ENCODE measurements at regions of chr10 and their contacts with region 1.

Region 1: DNA sequence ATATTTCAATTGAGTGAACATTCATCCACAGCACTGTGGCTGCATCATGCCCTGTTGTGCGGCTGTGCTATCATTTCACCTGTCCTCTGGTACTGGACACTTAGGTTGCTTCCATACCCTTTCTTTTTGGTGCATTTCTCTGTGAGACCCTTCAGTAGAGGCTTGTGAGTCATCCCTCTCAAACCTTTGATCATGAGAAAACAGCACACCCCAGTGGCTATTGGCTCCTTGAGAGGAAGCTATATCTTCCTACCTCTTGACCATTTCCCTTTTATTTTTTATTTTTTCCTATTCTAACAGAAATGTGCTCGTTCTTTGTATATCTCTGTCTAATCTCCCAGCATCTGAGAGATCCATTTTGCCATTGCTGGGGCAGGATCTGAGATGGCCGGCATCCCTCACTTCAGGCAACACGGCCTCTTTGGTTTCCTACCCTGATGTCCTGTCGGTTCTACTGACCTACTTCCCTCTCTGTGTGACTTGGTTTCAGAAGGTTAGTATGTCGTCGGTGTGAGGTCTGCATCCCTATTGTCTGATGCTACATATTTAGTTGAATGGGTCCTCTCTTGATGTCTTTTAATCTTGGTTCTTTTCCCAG is 23.8 kb upstream of the PIK3AP1 start:
- DNase-seq: no peak
- ATAC-seq: peak; percentile 61
- H3K4me3 ChIP-seq: no peak overlapping the region
- H3K27ac ChIP-seq: no peak overlapping the region
- H3K4me1 ChIP-seq: peaks cover 25% of the 10 kb centered on the region
- H3K27me3 ChIP-seq: no peaks in the 10 kb centered on the region
- CTCF ChIP-seq: peak; percentile 21 to 60 (median 38); a peak in 4 of 6 replicates
- EP300 ChIP-seq: no peak
- POLR2A ChIP-seq: no peak
- RAD21 ChIP-seq: peak; percentile 57

Region 2: DNA sequence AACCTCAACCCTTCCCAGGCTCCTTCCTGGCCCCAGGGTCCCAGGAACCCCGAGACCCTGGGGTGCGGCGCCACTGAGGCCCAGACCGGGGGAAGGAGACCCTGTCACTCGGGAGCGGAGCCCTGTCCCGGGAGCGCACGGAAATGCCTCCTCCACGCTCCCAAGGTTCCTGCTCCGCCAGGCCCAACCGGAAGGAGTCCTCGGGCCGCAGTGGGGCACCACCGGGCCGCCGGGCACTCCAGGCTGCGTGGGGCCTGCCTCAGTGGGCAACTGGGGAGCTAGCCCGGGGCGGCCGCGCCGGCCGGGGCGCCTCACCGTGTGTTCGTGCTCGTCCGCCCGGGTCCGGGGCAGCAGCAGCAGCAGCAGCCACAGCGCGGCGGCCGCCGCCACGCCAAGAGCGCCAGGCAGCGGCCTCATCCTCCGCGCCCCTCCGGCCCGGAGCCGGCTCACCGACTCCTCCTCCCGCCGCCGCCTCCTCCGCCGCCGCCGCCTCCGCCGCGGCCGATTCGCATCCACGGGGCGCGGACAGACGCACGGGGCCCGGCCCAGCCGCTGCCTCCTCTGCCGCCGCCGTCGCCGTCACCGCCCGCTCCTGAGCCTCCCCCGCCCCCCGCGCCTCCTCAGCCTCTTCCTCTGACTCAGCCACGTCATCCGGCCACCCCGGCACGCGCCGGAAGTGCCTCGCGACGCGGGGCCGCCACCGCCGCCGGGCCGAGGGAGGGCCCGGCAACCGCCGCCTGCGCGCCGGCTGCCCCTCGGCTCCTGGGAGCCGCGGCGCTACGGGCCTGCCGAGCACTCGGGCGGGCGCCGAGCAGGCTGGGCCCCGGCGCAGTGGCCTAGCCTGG is 157.4 kb before region 1 on chr10 and contains the start of gene TM9SF3:
- CTCF ChIA-PET with region 1: interaction called, 3 read pairs
- POLR2A ChIA-PET with region 1: no interaction called
- RAD21 ChIA-PET with region 1: interaction called, 3 read pairs
- SMC1A ChIA-PET with region 1: no interaction called
- in situ Hi-C with region 1: no loop called
- intact Hi-C with region 1: loop called (anchors 5 kb)
- DNase-seq: no peak
- ATAC-seq: peak; percentile 66
- H3K4me3 ChIP-seq: peak within 1 kb of the TSS; percentile 85
- H3K27ac ChIP-seq: peak within 1 kb of the TSS; percentile 96
- H3K4me1 ChIP-seq: peaks cover 22% of the 10 kb centered on the region
- H3K27me3 ChIP-seq: no peaks in the 10 kb centered on the region
- CTCF ChIP-seq: no peak
- EP300 ChIP-seq: no peak
- POLR2A ChIP-seq: peak; percentile 90
- RAD21 ChIP-seq: no peak
- polyA plus RNA-seq, gene TM9SF3: 17.1 to 20.4 TPM

Region 3: DNA sequence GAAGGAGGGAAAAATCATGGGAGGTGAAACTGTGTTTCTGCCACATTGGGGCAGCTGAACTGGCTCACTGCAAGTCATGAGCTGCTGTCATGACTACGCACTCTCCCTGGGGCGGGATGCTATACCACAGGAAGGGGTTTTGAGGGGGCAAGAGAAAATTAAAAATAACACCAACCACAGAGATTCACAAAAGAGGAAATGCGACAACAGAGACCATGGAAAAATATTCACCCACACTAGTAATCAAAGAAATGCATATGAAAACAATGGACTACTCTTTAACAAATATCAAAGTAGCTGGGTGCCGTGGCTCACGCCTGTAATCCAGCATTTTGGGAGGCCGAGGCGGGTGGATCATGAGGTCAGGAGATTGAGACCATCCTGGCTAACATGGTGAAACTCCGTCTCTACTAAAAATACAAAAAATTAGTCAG is 92.1 kb before region 1 on chr10:
- CTCF ChIA-PET with region 1: interaction called, 3 read pairs
- POLR2A ChIA-PET with region 1: interaction called, 4 read pairs
- RAD21 ChIA-PET with region 1: interaction called, 4 read pairs
- SMC1A ChIA-PET with region 1: interaction called, 24 read pairs
- in situ Hi-C with region 1: no loop called
- intact Hi-C with region 1: no loop called
- DNase-seq: peak; percentile 79
- ATAC-seq: peak; percentile 89
- H3K4me3 ChIP-seq: no peak overlapping the region
- H3K27ac ChIP-seq: peak overlapping the region; percentile 79
- H3K4me1 ChIP-seq: peaks cover 50% of the 10 kb centered on the region
- H3K27me3 ChIP-seq: no peaks in the 10 kb centered on the region
- CTCF ChIP-seq: no peak
- EP300 ChIP-seq: peak; percentile 85 to 95
- POLR2A ChIP-seq: no peak
- RAD21 ChIP-seq: 0 out of 2 replicates have a peak, but pooled peaks have one; percentile 2

Region 4: DNA sequence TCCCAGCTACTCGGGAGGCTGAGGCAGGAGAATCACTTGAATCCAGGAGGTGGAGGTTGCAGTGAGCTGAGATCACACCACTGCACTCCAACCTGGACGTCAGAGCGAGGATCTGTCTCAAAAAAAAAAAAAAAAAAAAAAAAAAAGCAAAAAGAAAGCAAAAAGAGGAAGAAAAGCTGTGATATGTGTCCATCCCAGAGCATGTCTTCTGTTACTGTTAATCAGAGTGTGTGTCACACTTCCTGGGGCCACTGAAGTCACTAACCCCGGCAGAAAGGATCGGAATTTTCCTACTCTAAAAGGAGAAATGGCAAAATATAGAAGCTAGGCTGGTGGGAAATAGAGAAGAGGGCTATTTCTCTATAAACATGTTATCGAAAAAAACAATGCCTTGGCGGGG is 35.6 kb before region 1 on chr10:
- CTCF ChIA-PET with region 1: interaction called, 6 read pairs
- POLR2A ChIA-PET with region 1: interaction called, 4 read pairs
- RAD21 ChIA-PET with region 1: interaction called, 7 read pairs
- SMC1A ChIA-PET with region 1: interaction called, 28 read pairs
- in situ Hi-C with region 1: no loop called
- intact Hi-C with region 1: no loop called
- DNase-seq: no peak
- ATAC-seq: peak; percentile 43
- H3K4me3 ChIP-seq: peak overlapping the region; percentile 62; the same call in 1 of the 2 replicates
- H3K27ac ChIP-seq: peak overlapping the region; percentile 61
- H3K4me1 ChIP-seq: peaks cover 37% of the 10 kb centered on the region
- H3K27me3 ChIP-seq: no peaks in the 10 kb centered on the region
- CTCF ChIP-seq: no peak
- EP300 ChIP-seq: no peak
- POLR2A ChIP-seq: no peak
- RAD21 ChIP-seq: no peak

Region 5: GRCh38 chr10:96765406-96766240 is 21.5 kb after region 1 on chr10:
- CTCF ChIA-PET with region 1: interaction called, 9 read pairs
- POLR2A ChIA-PET with region 1: interaction called, 3 read pairs
- RAD21 ChIA-PET with region 1: interaction called, 15 read pairs
- SMC1A ChIA-PET with region 1: interaction called, 9 read pairs
- in situ Hi-C with region 1: no loop called
- intact Hi-C with region 1: no loop called
- DNase-seq: no peak
- ATAC-seq: peak; percentile 94
- H3K4me3 ChIP-seq: no peak overlapping the region
- H3K27ac ChIP-seq: no peak overlapping the region
- H3K4me1 ChIP-seq: peaks cover 15% of the 10 kb centered on the region
- H3K27me3 ChIP-seq: no peaks in the 10 kb centered on the region
- CTCF ChIP-seq: peak; percentile 87 to 93 (median 89)
- EP300 ChIP-seq: no peak
- POLR2A ChIP-seq: no peak
- RAD21 ChIP-seq: peak; percentile 87

Measured in GM12878 (cell line).